ENCODE measurements at regions of chr15 and their contacts with region 1.

Region 1: GRCh38 chr15:82046666-82047452 is 1.0 kb upstream of the MEX3B start:
- DNase-seq: peak; percentile 95
- H3K4me3 ChIP-seq: peak overlapping the region; percentile 83
- H3K27ac ChIP-seq: peak overlapping the region; percentile 86
- H3K4me1 ChIP-seq: peaks cover 4% of the 10 kb centered on the region
- H3K27me3 ChIP-seq: peaks cover 22% of the 10 kb centered on the region
- CTCF ChIP-seq: peak; percentile 66

Region 2: DNA sequence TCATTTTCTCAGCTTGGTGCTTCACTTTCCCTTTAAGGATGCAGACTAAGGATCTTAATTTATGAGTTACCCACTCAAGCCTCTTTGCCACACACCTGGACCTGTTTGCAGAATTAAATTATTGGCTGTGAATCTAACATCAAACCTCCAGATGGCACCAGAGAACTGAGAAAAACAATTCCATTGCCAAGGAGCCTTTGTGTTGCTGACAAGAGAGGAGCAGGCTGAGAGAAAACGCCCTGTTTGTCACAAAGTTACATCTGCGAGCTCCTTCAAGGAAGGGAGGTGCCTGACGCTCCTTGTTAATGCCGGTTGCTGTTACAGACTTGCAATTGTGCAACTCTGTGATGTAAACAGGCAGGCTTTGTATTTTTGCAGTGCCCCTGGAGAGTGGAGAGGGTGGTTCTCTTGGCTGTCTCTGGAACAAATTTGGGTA is 636.5 kb before region 1 on chr15:
- CTCF ChIA-PET with region 1: no interaction called
- POLR2A ChIA-PET with region 1: no interaction called
- intact Hi-C with region 1: loop called (anchors 10 kb)
- DNase-seq: peak; percentile 73
- H3K4me3 ChIP-seq: no peak overlapping the region
- H3K27ac ChIP-seq: no peak overlapping the region
- H3K4me1 ChIP-seq: no peaks in the 10 kb centered on the region
- H3K27me3 ChIP-seq: peaks cover 38% of the 10 kb centered on the region
- CTCF ChIP-seq: peak; percentile 63

Region 3: GRCh38 chr15:81780966-81781365 is 265.9 kb before region 1 on chr15:
- CTCF ChIA-PET with region 1: no interaction called
- POLR2A ChIA-PET with region 1: no interaction called
- intact Hi-C with region 1: no loop called
- DNase-seq: no peak
- H3K4me3 ChIP-seq: no peak overlapping the region
- H3K27ac ChIP-seq: no peak overlapping the region
- H3K4me1 ChIP-seq: no peaks in the 10 kb centered on the region
- H3K27me3 ChIP-seq: no peaks in the 10 kb centered on the region
- CTCF ChIP-seq: no peak

Region 4: GRCh38 chr15:81887912-81888311 is 158.9 kb before region 1 on chr15:
- CTCF ChIA-PET with region 1: no interaction called
- POLR2A ChIA-PET with region 1: no interaction called
- intact Hi-C with region 1: no loop called
- DNase-seq: no peak
- H3K4me3 ChIP-seq: no peak overlapping the region
- H3K27ac ChIP-seq: no peak overlapping the region
- H3K4me1 ChIP-seq: no peaks in the 10 kb centered on the region
- H3K27me3 ChIP-seq: no peaks in the 10 kb centered on the region
- CTCF ChIP-seq: no peak

Region 5: GRCh38 chr15:82262422-82263026 is 215.7 kb after region 1 on chr15 and contains the starts of genes EFL1 and SAXO2:
- CTCF ChIA-PET with region 1: no interaction called
- POLR2A ChIA-PET with region 1: no interaction called
- intact Hi-C with region 1: no loop called
- DNase-seq: peak; percentile 93
- H3K4me3 ChIP-seq: peak within 1 kb of the TSS; percentile 96
- H3K27ac ChIP-seq: peak within 1 kb of the TSS; percentile 81
- H3K4me1 ChIP-seq: peaks cover 8% of the 10 kb centered on the region
- H3K27me3 ChIP-seq: no peaks in the 10 kb centered on the region
- CTCF ChIP-seq: no peak
- total RNA-seq, gene EFL1: 21.9 and 26.1 TPM in 2 replicates
- total RNA-seq, gene SAXO2: 1.5 and 1.9 TPM in 2 replicates